Transverse colon (tissue), 4 donors: ENCODE measurements at regions of chr11 and their contacts with region 1.

Region 1: DNA sequence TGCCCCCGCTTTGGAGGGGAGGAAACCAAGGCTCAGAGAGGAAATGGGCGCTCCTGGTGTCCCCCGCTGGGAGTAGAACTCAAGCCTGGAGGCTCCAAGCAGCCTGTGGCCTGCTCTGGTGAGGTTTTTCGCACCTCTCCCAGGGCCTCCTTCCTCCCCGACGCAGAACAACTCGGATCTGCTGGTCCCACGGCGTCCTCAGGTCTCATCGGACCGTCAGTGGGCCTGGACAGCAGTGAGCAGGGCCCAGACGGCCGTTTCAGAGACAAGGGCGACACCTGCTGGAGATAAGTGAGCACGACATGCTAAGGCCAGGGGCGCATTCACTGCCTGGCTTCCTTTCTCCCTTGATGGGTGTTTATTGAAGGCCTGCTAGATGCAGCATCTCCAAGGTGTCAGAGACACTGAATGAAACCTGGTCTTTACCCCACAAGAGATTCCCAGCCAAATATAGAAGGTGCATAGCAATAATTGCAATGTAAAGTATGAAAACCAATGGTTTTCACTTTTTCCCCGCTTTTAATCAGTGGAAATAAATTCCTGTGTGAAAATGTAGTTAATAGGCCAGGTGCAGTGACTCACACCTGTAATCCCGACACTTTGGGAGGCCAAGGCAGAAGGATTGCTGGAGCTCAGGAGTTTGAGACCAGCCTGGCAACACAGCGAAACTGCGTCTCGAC is 26.9 kb upstream of the CD82 start:
- DNase-seq: peak; percentile 72
- H3K4me3 ChIP-seq: no peak overlapping the region
- H3K27ac ChIP-seq: no peak overlapping the region
- H3K4me1 ChIP-seq: no peaks in the 10 kb centered on the region
- H3K27me3 ChIP-seq: peaks cover 12% of the 10 kb centered on the region
- CTCF ChIP-seq: peak; percentile 88 to 96 (median 93)
- EP300 ChIP-seq: no peak
- POLR2A ChIP-seq: no peak

Region 2: DNA sequence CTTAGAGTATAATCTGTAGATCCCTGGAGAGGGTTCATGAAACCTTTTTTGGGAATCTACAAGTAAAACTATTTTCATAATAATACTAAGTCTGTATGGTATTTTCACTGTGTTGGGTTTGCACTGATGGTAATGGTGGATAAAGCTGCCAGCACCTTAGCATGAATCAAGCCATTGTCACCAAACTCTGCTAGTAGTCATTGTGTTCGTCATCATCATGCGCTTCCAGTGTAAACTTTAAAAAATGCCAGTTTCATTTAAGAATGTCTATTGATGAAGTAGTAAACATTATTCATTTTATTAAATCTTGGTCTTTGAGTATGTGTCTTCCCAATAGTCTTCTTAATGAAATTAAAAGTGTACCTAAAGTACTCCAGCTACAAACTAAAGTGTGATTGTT is 642.9 kb before region 1 on chr11:
- in situ Hi-C with region 1: no loop called
- intact Hi-C with region 1: loop called (anchors 10 kb)
- DNase-seq: no peak
- H3K4me3 ChIP-seq: no peak overlapping the region
- H3K27ac ChIP-seq: no peak overlapping the region
- H3K4me1 ChIP-seq: no peaks in the 10 kb centered on the region
- H3K27me3 ChIP-seq: no peaks in the 10 kb centered on the region
- CTCF ChIP-seq: no peak
- EP300 ChIP-seq: no peak
- POLR2A ChIP-seq: no peak

Region 3: GRCh38 chr11:44095506-44096394 is 442.8 kb before region 1 on chr11 and contains the start of gene EXT2:
- in situ Hi-C with region 1: loop called (anchors 10 to 25 kb)
- intact Hi-C with region 1: no loop called
- DNase-seq: peak; percentile 91
- H3K4me3 ChIP-seq: peak within 1 kb of the TSS; percentile 66 to 88 (median 82)
- H3K27ac ChIP-seq: peak within 1 kb of the TSS; percentile 75 to 89 (median 84)
- H3K4me1 ChIP-seq: peaks cover 7 to 24% (median 11%) of the 10 kb centered on the region in 4 donors
- H3K27me3 ChIP-seq: no peaks in the 10 kb centered on the region
- CTCF ChIP-seq: peak; percentile 76 to 90 (median 88)
- EP300 ChIP-seq: no peak
- POLR2A ChIP-seq: peak; percentile 54
- total RNA-seq, gene EXT2: 32.2 to 82.9 (median 59.6) TPM

Region 4: GRCh38 chr11:44104481-44105294 is 433.8 kb before region 1 on chr11:
- in situ Hi-C with region 1: loop called (anchors 10 to 25 kb)
- intact Hi-C with region 1: no loop called
- DNase-seq: no peak
- H3K4me3 ChIP-seq: no peak overlapping the region
- H3K27ac ChIP-seq: no peak overlapping the region
- H3K4me1 ChIP-seq: no peaks in the 10 kb centered on the region
- H3K27me3 ChIP-seq: no peaks in the 10 kb centered on the region
- CTCF ChIP-seq: no peak
- EP300 ChIP-seq: no peak
- POLR2A ChIP-seq: no peak

Region 5: GRCh38 chr11:44110231-44110679 is 428.3 kb before region 1 on chr11:
- in situ Hi-C with region 1: loop called in 2 of 4 experiments (anchors 10 to 25 kb)
- intact Hi-C with region 1: no loop called
- DNase-seq: peak; percentile 53
- H3K4me3 ChIP-seq: no peak overlapping the region
- H3K27ac ChIP-seq: no peak overlapping the region
- H3K4me1 ChIP-seq: peaks cover 0 to 5% (median 0%) of the 10 kb centered on the region in 4 donors
- H3K27me3 ChIP-seq: no peaks in the 10 kb centered on the region
- CTCF ChIP-seq: peak; percentile 56 to 64 (median 61)
- EP300 ChIP-seq: no peak
- POLR2A ChIP-seq: no peak

Region 6: GRCh38 chr11:44286268-44286880 is 252.1 kb before region 1 on chr11:
- in situ Hi-C with region 1: loop called (anchors 5 to 10 kb)
- intact Hi-C with region 1: loop called (anchors 1 kb)
- DNase-seq: peak; percentile 41
- H3K4me3 ChIP-seq: no peak overlapping the region
- H3K27ac ChIP-seq: no peak overlapping the region
- H3K4me1 ChIP-seq: no peaks in the 10 kb centered on the region
- H3K27me3 ChIP-seq: peaks cover 5% of the 10 kb centered on the region
- CTCF ChIP-seq: peak; percentile 88 to 95 (median 93)
- EP300 ChIP-seq: no peak
- POLR2A ChIP-seq: no peak